Sciatic nerve (tissue), 2 donors: ENCODE measurements at regions of chr7 and their contacts with region 1.

Region 1: GRCh38 chr7:50475340-50475739 is 25.2 kb upstream of the FIGNL1 start:
- DNase-seq: no peak
- ATAC-seq: no peak

Region 2: GRCh38 chr7:50679218-50680007 is 204.1 kb after region 1 on chr7:
- intact Hi-C with region 1: loop called (anchors 10 kb)
- DNase-seq: no peak
- ATAC-seq: peak; percentile 64

Region 3: DNA sequence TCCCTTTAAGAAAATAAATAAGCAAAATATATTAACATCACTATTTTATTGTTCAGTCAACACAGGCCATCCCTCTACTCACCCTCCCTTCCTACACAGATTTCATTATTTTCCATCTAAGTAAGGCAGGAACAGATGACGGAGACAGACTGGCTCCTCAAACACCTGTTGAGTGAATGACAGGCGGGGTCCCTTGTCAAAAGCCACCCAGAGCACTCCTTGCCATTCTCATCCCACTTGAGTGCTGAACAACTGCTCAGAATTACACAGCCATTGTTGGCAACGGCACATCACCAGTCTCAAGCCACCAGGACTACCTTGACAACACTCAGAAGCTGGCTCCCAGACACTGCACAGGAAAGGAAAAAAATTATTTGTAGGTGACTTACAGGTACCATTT is 304.1 kb after region 1 on chr7:
- intact Hi-C with region 1: loop called (anchors 5 kb)
- DNase-seq: no peak
- ATAC-seq: no peak

Region 4: DNA sequence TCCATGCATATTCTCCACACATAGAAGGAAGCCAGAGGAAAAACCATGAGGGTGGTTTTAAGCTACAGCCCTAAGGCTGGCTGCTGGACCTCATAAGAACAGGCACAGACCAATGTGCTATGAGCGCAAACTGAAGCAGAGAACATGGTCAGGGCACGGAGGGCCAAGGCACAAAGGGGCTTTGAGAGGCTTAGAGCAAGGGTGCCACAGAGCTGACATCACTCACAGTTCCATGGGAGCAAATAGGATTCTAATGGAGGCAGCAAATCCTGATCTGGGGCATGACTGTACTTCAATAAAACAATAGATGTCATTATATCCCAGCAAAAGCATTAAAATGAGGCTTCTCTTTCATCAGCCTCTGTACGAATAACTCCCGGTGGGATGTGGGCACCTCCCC is 678.9 kb after region 1 on chr7:
- intact Hi-C with region 1: loop called (anchors 10 kb)
- DNase-seq: no peak
- ATAC-seq: peak; percentile 46